ENCODE measurements at regions of chr5 and their contacts with region 1.

Region 1: GRCh38 chr5:165185716-165186115 is 1680.3 kb downstream of the MAT2B start:
- DNase-seq: no peak
- ATAC-seq: no peak

Region 2: DNA sequence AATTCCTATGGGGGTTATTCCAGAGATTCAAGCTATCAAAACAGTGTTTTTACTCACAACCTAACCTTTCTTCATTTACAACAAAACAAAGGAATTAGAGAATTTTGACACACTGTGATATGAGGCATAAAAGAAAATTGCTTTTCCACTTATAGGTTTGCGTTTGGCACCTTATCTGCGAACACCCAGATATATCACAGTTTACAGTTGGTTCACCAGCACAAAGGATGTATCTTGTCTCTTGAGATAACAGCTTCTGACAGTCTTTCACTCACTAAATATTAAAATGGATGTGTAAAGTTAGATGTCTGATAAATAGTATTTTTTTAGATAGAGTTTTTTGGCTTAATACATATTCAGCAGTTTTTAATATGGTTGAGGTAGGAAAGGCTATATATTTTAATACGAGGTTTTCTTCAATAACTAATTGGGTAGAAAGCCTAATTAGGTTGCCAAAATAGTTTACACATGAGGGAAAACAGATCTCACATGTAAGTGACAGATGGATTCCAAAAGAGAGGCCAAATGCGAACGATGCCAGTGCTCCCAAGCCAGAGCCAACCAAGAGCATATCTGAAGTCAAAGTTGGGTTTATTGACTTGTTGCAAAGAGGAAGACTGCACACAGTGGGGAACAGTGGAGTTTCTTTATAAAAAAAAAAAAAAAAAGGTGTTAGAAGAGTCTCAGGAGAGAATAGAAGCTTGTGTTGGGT is 185.1 kb before region 1 on chr5:
- intact Hi-C with region 1: no loop called
- DNase-seq: no peak
- ATAC-seq: no peak

Region 3: DNA sequence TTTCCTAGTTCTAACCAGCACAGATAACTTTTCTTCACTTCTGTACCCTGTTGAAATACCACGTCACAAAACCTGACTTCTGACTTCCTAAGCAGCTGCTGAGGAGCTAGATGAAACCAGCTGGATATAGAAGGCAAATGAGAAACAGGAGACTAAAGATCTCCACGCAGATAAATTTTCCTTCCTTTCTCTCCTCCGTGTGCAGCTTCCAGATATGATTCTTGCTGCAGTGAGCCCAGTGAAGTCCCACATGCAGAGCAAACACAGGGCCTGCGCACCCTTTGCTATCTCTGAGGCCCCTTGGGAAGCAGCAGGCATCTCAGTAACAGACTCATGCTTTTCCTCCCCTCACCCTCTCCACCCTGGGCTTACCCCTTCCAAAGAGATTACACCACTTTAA is 42.0 kb before region 1 on chr5:
- intact Hi-C with region 1: loop called (anchors 2 kb)
- DNase-seq: no peak
- ATAC-seq: peak; percentile 38